ENCODE measurements at regions of chr1 and their contacts with region 1.

Region 1: DNA sequence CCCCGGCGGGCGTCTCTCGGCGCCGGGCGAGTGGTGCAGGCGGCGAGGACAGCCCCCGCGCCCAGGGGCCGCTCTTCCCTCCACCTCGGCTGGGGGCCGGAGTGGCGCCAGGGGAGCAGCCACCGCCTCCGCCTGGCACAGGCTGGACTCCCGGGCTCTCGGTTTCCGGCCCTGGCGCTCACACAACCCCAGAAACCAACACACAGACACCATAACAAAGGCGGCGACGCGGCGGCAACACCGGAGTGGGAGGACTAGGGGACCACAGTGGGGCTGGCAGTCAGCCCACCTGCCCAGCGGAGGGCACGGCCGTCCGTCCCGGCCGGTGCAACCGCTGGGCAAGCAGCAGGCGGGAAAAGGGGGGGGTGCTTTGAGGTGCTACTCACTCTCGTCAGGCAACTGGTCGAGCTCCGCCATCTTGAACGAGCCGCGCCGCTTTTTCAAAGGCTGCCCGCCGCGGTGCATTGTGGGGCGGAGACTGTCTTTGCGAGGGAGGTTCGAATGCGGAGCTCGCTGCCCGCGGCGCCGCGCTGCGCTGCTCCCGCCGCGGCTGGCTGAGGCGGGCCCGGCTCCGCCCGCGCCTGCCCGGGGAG is at the start of gene LIN9:
- DNase-seq: peak; percentile 90 to 94 (median 93)
- ATAC-seq: peak; percentile 65 to 90 (median 82)
- H3K4me3 ChIP-seq: peak within 1 kb of the TSS; percentile 74 to 100 (median 96)
- H3K27ac ChIP-seq: peak within 1 kb of the TSS; percentile 78 to 98 (median 90)
- H3K4me1 ChIP-seq: peaks cover 0 to 35% (median 12%) of the 10 kb centered on the region in 12 donors
- H3K27me3 ChIP-seq: no peaks in the 10 kb centered on the region
- CTCF ChIP-seq: peak in 3 of 12 donors; percentile 8 to 27 (median 23)
- POLR2A ChIP-seq: peak in 1 of 2 donors; percentile 33
- total RNA-seq, gene LIN9: 10.9 to 21.0 (median 18.0) TPM

Region 2: DNA sequence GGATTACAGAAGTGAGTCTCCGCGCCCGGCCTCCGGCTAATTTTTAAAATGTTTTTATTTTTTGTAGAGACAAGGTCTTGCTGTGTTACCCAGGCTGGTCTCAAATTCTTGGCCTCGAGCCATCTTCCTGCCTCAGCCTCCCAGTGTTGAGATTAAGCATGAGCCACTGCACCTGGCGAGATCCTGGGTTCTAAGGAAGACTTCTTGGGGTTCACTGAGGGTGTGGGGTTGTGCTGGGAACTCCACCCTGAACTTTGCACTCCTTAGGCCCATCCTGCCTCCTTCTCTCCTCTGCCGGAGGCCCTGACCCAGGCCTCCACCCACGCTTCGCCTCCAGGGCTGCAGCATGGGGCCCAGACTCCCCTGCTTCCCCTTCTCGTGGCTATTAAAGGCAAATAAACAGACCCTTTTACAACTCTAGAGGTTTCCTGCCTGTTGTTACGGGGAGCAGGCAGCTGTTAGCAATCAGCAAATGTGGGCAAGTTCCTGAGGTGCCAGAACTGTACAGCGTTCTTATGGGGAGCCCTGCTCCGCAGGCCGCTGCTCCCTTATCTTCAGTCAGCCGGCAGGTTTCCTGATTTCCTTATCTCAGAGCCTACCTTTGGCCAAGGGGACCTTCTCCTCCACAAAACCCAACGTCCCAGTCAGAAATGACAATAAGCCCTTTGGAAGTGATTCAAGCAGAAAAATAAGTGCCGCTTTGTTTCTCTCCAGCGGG is 41.1 kb after region 1 on chr1:
- intact Hi-C with region 1: loop called in 1 of 10 experiments (anchors 5 kb)
- DNase-seq: no peak
- ATAC-seq: no peak
- H3K4me3 ChIP-seq: no peak overlapping the region
- H3K27ac ChIP-seq: no peak overlapping the region
- H3K4me1 ChIP-seq: peaks cover 0 to 30% (median 14%) of the 10 kb centered on the region in 12 donors
- H3K27me3 ChIP-seq: no peaks in the 10 kb centered on the region
- CTCF ChIP-seq: no peak
- POLR2A ChIP-seq: no peak

Region 3: GRCh38 chr1:226407497-226408284 is 98.9 kb after region 1 on chr1 and contains the start of gene PARP1:
- intact Hi-C with region 1: loop called in 1 of 10 experiments (anchors 5 kb)
- DNase-seq: peak; percentile 88 to 94 (median 93)
- ATAC-seq: peak; percentile 84 to 94 (median 90)
- H3K4me3 ChIP-seq: peak within 1 kb of the TSS; percentile 62 to 98 (median 88)
- H3K27ac ChIP-seq: peak within 1 kb of the TSS; percentile 44 to 93 (median 86)
- H3K4me1 ChIP-seq: peaks cover 7 to 46% (median 41%) of the 10 kb centered on the region in 12 donors
- H3K27me3 ChIP-seq: no peaks in the 10 kb centered on the region
- CTCF ChIP-seq: peak; percentile 35 to 98 (median 90)
- POLR2A ChIP-seq: peak; percentile 34 to 81
- total RNA-seq, gene PARP1: 98.8 to 168 (median 111) TPM

Measured in heart left ventricle (tissue), 16 donors.